ENCODE measurements at regions of chr11 and their contacts with region 1.

Region 1: GRCh38 chr11:96464700-96465307 is 75.0 kb downstream of the JRKL start:
- DNase-seq: peak; percentile 36
- H3K4me3 ChIP-seq: no peak overlapping the region
- H3K27ac ChIP-seq: no peak overlapping the region
- H3K27me3 ChIP-seq: no peaks in the 10 kb centered on the region
- CTCF ChIP-seq: peak; percentile 75

Region 2: GRCh38 chr11:95699631-95700470 is 765.0 kb before region 1 on chr11:
- CTCF ChIA-PET with region 1: no interaction called
- POLR2A ChIA-PET with region 1: no interaction called
- DNase-seq: no peak
- H3K4me3 ChIP-seq: no peak overlapping the region
- H3K27ac ChIP-seq: no peak overlapping the region
- H3K27me3 ChIP-seq: no peaks in the 10 kb centered on the region
- CTCF ChIP-seq: no peak

Region 3: DNA sequence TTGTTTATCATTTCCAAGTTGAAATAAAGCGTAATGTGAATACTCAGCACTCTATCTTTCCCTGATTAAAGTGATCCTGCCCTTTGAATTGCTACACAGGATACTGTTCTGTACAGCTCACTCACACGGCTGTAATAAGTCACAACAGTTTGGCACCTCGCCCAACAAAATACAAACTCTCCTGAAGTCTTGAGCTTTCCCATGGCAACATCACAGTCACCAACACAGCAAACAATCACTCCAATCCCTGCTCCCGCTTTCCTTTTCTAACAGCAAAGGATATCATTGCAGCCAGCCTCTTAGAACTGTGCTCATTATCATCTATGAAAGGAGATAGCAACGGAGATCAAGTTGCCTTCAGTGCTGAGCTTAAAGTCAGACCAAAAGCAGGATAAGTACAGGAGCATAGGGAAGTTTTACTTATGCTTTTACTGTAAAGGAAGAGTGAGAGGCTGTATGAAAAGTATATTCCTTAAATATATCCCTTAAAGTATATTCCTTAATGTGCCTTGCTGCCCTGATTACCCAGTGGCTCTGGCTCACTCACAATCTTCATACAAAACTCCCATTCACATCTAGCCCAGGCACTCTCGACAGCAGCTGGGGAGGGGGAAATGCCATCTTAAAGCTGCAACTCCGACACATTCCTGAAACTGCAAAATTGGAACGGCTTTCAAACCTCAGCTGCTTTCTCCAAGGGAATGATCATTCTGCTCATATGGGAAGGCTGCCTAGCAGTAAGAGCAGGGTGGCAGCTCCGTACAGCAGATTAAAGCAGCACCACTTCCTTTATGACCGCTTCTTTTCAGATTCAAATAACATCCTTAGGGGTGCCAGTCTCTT is 157.7 kb before region 1 on chr11:
- CTCF ChIA-PET with region 1: no interaction called
- POLR2A ChIA-PET with region 1: no interaction called
- DNase-seq: peak; percentile 93
- H3K4me3 ChIP-seq: peak overlapping the region; percentile 51
- H3K27ac ChIP-seq: peak overlapping the region; percentile 93
- H3K27me3 ChIP-seq: no peaks in the 10 kb centered on the region
- CTCF ChIP-seq: no peak

Region 4: DNA sequence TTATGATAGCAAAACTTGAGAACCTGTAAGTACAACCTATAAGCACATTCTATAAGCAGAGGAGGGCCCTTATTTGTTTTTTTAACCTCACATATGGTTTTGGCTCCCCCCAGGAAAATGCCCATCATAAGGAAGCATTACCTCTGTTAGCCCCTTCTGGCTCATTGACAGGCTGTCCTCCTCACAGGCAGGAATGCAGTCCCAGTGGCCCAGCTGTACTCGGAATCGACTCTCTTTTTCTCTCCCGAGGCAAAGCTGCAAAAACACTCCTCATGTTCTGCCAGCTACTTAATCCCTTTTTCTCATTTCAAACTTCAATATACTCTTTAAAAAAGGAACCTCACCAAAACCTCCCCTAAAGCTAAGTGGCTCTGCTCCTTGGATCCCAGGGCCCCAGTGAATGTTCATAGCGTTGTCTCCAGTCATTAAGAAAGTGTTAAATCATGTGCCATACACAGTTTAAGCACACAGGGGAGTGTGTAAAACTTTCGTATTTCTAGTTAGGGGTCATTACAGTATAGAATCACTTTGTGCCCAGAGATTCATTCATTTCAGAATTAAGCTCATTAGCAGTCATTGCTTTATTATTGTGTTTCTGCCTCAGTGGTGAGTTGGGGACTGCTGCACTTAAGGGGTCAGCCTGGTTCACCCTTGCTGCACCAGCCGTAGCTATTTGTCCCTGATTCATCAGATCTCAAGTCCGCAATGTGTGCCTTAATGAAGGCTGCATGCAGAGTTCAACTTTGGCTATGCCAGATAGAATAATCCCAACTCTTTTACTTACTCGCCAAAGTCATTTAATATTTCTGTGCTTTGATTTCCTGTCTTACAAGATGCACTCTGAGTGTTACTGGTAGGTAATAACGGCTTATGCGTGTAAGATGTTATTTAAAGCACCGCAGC is 17.3 kb before region 1 on chr11:
- CTCF ChIA-PET with region 1: interaction called, 38 read pairs
- POLR2A ChIA-PET with region 1: no interaction called
- DNase-seq: no peak
- H3K4me3 ChIP-seq: no peak overlapping the region
- H3K27ac ChIP-seq: no peak overlapping the region
- H3K27me3 ChIP-seq: peaks cover 16% of the 10 kb centered on the region
- CTCF ChIP-seq: no peak

Region 5: GRCh38 chr11:96483374-96483955 is 18.7 kb after region 1 on chr11:
- CTCF ChIA-PET with region 1: interaction called, 28 read pairs
- POLR2A ChIA-PET with region 1: no interaction called
- DNase-seq: no peak
- H3K4me3 ChIP-seq: no peak overlapping the region
- H3K27ac ChIP-seq: no peak overlapping the region
- H3K27me3 ChIP-seq: no peaks in the 10 kb centered on the region
- CTCF ChIP-seq: no peak

Region 6: DNA sequence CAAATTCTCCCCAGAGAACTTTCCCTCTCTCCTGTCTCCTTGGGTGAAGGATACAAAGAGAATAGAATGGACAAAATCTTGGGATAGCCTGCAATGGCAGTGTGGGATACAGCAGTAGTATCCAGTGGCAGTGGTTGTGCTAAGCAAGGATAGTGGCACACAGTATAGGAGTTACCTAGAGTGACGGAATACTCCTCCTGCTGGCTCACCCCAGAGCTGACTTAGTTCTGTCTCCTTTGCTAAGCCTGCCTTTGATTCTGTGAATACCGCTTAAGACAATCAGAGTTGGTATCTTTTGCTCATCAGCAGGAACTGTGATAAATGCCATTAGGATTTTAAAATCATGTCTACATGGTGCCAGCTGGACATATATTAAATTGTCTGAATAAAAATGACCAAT is 329.3 kb after region 1 on chr11:
- CTCF ChIA-PET with region 1: interaction called, 11 read pairs
- POLR2A ChIA-PET with region 1: no interaction called
- DNase-seq: no peak
- H3K4me3 ChIP-seq: no peak overlapping the region
- H3K27ac ChIP-seq: no peak overlapping the region
- H3K27me3 ChIP-seq: no peaks in the 10 kb centered on the region
- CTCF ChIP-seq: 0 out of 2 replicates have a peak, but pooled peaks have one; percentile 11